ENCODE measurements at regions of chr20 and their contacts with region 1.

Region 1: DNA sequence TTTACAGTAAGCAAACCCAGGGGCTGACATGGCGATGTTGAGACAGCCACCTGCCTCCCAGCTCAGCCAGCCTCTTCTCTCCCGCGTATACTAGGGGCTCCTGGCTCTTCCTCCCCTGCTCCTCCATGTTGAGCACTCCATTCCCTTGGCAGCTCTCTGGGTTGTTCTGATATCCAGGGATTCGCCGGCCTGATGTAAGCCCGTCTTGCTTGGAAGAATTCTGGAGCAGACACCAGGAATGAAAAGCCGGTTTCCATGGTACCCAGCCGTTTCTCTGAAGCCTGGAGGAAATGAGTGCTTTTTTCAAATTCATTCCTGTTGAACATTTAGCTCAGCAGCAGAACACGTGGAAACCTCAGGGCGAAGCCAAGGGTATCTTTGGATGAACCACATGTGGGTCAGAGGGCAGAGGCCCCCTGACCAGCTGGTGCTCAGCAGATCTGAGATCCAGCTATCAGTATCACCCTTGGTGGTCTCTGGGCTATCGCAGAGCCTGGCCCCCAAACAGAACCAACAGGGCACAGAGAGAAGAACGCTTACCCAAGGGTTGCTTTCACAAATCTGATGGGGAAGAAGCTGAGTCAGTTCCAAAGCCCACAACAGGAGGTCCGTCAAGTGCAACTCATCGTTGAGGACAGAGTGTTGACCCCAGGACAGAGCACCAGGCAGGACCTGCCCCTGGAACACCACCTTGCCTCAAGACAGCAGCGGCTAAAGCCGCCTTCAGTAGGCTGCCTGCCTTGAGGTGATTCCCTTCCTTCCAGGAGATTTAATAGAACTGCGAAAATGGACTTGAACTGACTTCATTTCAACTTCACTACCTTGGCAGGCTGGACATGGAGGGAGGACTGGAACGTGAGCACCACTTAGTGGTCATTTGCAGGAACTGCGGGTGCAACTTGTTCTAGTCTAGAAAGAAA is 96.1 kb upstream of the RIN2 start:
- DNase-seq: peak; percentile 65
- H3K4me3 ChIP-seq: peak overlapping the region in 1 of 2 experiments; percentile 47; a peak in 1 of 4 replicates
- H3K27ac ChIP-seq: no peak overlapping the region
- H3K4me1 ChIP-seq: peaks cover 0 to 14% of the 10 kb centered on the region in 2 experiments; a peak in 1 of 4 replicates
- H3K27me3 ChIP-seq: peaks cover 67% of the 10 kb centered on the region; the same call in 1 of the 2 replicates
- CTCF ChIP-seq: peak; percentile 98
- EP300 ChIP-seq: no peak
- RAD21 ChIP-seq: peak; percentile 96

Region 2: GRCh38 chr20:19205977-19206396 is 456.0 kb before region 1 on chr20:
- CTCF ChIA-PET with region 1: interaction called, 56 read pairs
- POLR2A ChIA-PET with region 1: no interaction called
- DNase-seq: peak; percentile 69
- H3K4me3 ChIP-seq: no peak overlapping the region; a peak in 1 of 4 replicates
- H3K27ac ChIP-seq: no peak overlapping the region
- H3K4me1 ChIP-seq: no peaks in the 10 kb centered on the region; a peak in 1 of 4 replicates
- H3K27me3 ChIP-seq: peaks cover 29% of the 10 kb centered on the region
- CTCF ChIP-seq: peak; percentile 92
- EP300 ChIP-seq: no peak
- RAD21 ChIP-seq: peak; percentile 64

Region 3: GRCh38 chr20:19628570-19629169 is 33.3 kb before region 1 on chr20:
- CTCF ChIA-PET with region 1: interaction called, 97 read pairs
- POLR2A ChIA-PET with region 1: no interaction called
- DNase-seq: peak; percentile 62
- H3K4me3 ChIP-seq: no peak overlapping the region; a peak in 1 of 4 replicates
- H3K27ac ChIP-seq: no peak overlapping the region
- H3K4me1 ChIP-seq: no peaks in the 10 kb centered on the region
- H3K27me3 ChIP-seq: no peaks in the 10 kb centered on the region
- CTCF ChIP-seq: peak; percentile 72
- EP300 ChIP-seq: no peak
- RAD21 ChIP-seq: peak; percentile 55

Region 4: DNA sequence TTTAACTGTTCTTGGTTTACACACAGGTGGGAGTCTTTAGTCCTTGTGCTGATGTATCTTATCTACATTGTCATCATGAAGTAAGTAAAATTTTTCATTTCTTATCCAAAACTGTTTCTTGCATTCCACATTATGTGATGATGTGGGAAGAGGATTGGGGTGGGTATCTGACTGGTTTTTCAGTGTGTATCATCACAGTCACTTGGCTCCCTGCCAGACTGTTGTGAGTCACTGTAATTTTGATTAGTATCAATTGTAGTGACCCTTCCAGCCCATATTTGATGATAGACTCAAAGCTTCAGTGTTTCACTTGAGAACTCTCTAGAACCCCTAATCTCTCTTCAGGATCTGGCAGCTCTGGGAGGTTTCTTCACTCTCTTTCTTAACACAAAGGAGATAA is 11.6 kb after region 1 on chr20:
- CTCF ChIA-PET with region 1: interaction called, 50 read pairs
- POLR2A ChIA-PET with region 1: no interaction called
- DNase-seq: no peak
- H3K4me3 ChIP-seq: no peak overlapping the region
- H3K27ac ChIP-seq: no peak overlapping the region
- H3K4me1 ChIP-seq: no peaks in the 10 kb centered on the region
- H3K27me3 ChIP-seq: peaks cover 25% of the 10 kb centered on the region; the same call in 1 of the 2 replicates
- CTCF ChIP-seq: no peak
- EP300 ChIP-seq: no peak
- RAD21 ChIP-seq: no peak

Region 5: DNA sequence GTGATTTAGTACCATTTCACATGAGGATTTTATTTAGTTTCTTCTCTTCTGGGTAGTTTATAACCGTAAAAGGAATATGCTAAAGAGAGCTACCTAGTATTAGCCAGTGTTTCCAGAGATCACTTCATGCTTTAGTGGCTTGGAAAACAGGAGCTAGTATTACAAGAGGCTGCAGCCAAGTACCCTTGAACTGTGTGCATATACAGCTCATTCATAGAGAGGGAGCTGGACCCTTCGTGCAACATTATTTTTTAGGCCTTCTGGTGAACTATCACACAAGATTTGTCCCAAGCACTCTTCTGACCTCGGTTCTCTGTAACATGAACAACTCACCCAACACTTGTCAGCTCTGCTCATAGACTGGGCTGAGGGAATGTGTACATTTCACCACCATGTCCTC is 21.2 kb after region 1 on chr20:
- CTCF ChIA-PET with region 1: interaction called, 14 read pairs
- POLR2A ChIA-PET with region 1: no interaction called
- DNase-seq: no peak
- H3K4me3 ChIP-seq: no peak overlapping the region
- H3K27ac ChIP-seq: no peak overlapping the region
- H3K4me1 ChIP-seq: 0 out of 4 replicates have a peak, but pooled peaks cover 0 to 1% of the 10 kb centered on the region in 2 experiments
- H3K27me3 ChIP-seq: peaks cover 17% of the 10 kb centered on the region; the same call in 1 of the 2 replicates
- CTCF ChIP-seq: no peak
- EP300 ChIP-seq: no peak
- RAD21 ChIP-seq: no peak